CD8-positive, alpha-beta memory T cell (primary cell): ENCODE measurements at regions of chr6 and their contacts with region 1.

Region 1: GRCh38 chr6:31559958-31560696 is 12.0 kb upstream of the LTA start:
- DNase-seq: peak in 3 of 5 donors; percentile 42 to 64 (median 49)
- H3K4me3 ChIP-seq: peak overlapping the region; percentile 54
- H3K4me3 Mint-ChIP-seq: peak overlapping the region; percentile 76 to 91 (median 85)
- H3K27ac ChIP-seq: peak overlapping the region; percentile 18
- H3K27ac Mint-ChIP-seq: peak overlapping the region; percentile 89 to 97 (median 94)
- H3K4me1 ChIP-seq: peaks cover 70% of the 10 kb centered on the region
- H3K4me1 Mint-ChIP-seq: peaks cover 62 to 79% (median 74%) of the 10 kb centered on the region in 3 donors
- H3K27me3 ChIP-seq: no peaks in the 10 kb centered on the region
- H3K27me3 Mint-ChIP-seq: no peaks in the 10 kb centered on the region

Region 2: GRCh38 chr6:31546962-31547726 is 13.0 kb before region 1 on chr6 and contains the start of gene NFKBIL1:
- CTCF ChIA-PET with region 1: interaction called, 23 read pairs
- POLR2A ChIA-PET with region 1: interaction called, 3 read pairs
- DNase-seq: peak; percentile 84 to 92 (median 87)
- H3K4me3 ChIP-seq: peak within 1 kb of the TSS; percentile 67
- H3K4me3 Mint-ChIP-seq: peak within 1 kb of the TSS; percentile 74 to 93 (median 91)
- H3K27ac ChIP-seq: peak within 1 kb of the TSS; percentile 71
- H3K27ac Mint-ChIP-seq: peak within 1 kb of the TSS; percentile 83 to 99 (median 96)
- H3K4me1 ChIP-seq: peaks cover 30% of the 10 kb centered on the region
- H3K4me1 Mint-ChIP-seq: peaks cover 38 to 50% (median 49%) of the 10 kb centered on the region in 3 donors
- H3K27me3 ChIP-seq: no peaks in the 10 kb centered on the region
- H3K27me3 Mint-ChIP-seq: no peaks in the 10 kb centered on the region
- total RNA-seq, gene NFKBIL1: 13.5 to 13.8 TPM

Region 3: DNA sequence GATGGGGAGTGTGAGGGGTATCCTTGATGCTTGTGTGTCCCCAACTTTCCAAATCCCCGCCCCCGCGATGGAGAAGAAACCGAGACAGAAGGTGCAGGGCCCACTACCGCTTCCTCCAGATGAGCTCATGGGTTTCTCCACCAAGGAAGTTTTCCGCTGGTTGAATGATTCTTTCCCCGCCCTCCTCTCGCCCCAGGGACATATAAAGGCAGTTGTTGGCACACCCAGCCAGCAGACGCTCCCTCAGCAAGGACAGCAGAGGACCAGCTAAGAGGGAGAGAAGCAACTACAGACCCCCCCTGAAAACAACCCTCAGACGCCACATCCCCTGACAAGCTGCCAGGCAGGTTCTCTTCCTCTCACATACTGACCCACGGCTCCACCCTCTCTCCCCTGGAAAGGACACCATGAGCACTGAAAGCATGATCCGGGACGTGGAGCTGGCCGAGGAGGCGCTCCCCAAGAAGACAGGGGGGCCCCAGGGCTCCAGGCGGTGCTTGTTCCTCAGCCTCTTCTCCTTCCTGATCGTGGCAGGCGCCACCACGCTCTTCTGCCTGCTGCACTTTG is 15.3 kb after region 1 on chr6 and contains the start of gene TNF:
- CTCF ChIA-PET with region 1: interaction called, 576 read pairs
- POLR2A ChIA-PET with region 1: interaction called, 42 read pairs
- DNase-seq: peak in 4 of 5 donors; percentile 64 to 79 (median 72)
- H3K4me3 ChIP-seq: peak within 1 kb of the TSS; percentile 82
- H3K4me3 Mint-ChIP-seq: peak within 1 kb of the TSS; percentile 98 to 100 (median 100)
- H3K27ac ChIP-seq: peak within 1 kb of the TSS; percentile 60
- H3K27ac Mint-ChIP-seq: peak within 1 kb of the TSS; percentile 92 to 100 (median 100)
- H3K4me1 ChIP-seq: peaks cover 89% of the 10 kb centered on the region
- H3K4me1 Mint-ChIP-seq: peaks cover 89 to 98% (median 98%) of the 10 kb centered on the region in 3 donors
- H3K27me3 ChIP-seq: no peaks in the 10 kb centered on the region
- H3K27me3 Mint-ChIP-seq: peaks cover 0 to 1% of the 10 kb centered on the region in 2 donors
- total RNA-seq, gene TNF: 207 to 215 TPM

Region 4: DNA sequence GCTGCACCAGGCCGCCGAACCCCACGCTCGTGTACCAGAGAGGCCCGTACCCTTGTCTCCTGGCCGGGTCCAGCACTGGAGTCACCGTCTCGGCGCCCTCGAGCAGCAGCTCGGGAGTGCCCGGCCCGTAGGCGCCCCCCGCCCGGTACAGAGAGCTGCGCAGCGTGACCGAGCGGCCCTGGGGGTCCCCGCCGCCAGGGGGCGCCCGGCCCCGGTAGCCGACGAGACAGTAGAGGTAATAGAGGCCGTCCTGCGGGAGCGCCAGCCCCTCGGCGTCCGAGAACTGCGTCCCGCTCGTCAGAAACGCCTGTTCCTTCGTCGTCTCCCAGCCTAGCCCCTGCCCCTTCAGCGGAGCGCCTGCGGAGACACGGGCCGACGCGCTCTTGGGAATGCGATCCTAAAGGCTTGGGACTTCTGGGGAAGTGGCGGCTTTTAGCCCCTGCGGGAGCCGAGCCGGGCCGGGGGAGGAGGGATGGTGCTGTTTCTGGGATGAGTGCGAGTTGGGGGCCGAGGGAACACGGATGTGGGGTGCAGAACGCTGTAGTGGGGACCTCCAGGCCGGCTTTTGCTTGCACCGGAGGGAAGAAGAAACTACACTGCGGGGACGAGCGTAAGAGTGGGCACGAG is 20.8 kb after region 1 on chr6:
- CTCF ChIA-PET with region 1: interaction called, 576 read pairs
- POLR2A ChIA-PET with region 1: interaction called, 42 read pairs
- DNase-seq: peak; percentile 83 to 91 (median 87)
- H3K4me3 ChIP-seq: peak overlapping the region; percentile 93
- H3K4me3 Mint-ChIP-seq: peak overlapping the region; percentile 98 to 100 (median 99)
- H3K27ac ChIP-seq: peak overlapping the region; percentile 85
- H3K27ac Mint-ChIP-seq: peak overlapping the region; percentile 87 to 100 (median 96)
- H3K4me1 ChIP-seq: peaks cover 80% of the 10 kb centered on the region
- H3K4me1 Mint-ChIP-seq: peaks cover 70 to 88% (median 80%) of the 10 kb centered on the region in 3 donors
- H3K27me3 ChIP-seq: no peaks in the 10 kb centered on the region
- H3K27me3 Mint-ChIP-seq: peaks cover 0 to 1% of the 10 kb centered on the region in 2 donors